ENCODE measurements at regions of chr11 and their contacts with region 1.

Region 1: GRCh38 chr11:12288212-12288930 is 89.0 kb upstream of the PARVA start:
- DNase-seq: peak; percentile 83
- H3K4me3 ChIP-seq: peak overlapping the region; percentile 27
- CTCF ChIP-seq: peak; percentile 94

Region 2: DNA sequence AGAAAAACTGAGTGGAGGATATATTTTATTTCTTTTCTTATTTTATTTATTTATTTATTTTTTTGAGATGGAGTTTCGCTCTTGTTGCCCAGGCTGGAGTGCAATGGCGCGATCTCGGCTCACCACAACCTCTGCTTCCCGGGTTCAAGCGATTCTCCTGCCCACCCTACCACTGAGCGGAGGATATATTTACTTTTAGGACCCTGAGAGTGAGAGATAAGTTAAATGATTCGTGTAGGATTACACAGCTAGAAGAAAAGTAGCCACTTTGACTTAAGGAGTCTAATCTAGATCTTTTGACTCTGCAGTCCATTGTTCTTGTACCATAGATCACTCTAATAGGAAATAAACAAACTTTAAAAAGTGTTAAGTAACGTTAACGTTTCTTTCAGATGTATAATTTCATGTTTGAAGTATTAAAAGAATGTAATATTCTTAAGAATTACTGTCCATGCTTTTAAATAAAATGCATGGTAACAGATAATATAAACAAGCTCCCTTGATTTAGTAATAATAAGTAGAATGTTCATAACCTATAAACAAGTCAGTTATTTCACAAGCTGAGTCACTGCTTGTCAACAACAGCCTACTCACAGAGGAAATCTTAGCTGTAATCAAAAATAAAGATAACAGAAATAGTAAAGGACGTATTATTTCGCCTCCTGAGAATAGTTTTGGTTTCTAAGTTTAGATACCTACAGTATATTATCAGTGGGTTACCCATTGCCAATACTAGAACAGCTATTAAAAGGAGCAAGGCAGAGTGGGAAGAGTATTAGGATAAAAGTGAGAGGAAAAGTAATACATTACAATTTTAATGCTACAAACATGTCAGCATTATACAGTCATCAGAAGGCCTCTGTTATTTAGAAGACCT is 428.0 kb before region 1 on chr11:
- CTCF ChIA-PET with region 1: no interaction called
- POLR2A ChIA-PET with region 1: no interaction called
- DNase-seq: no peak
- H3K4me3 ChIP-seq: no peak overlapping the region
- CTCF ChIP-seq: no peak

Region 3: DNA sequence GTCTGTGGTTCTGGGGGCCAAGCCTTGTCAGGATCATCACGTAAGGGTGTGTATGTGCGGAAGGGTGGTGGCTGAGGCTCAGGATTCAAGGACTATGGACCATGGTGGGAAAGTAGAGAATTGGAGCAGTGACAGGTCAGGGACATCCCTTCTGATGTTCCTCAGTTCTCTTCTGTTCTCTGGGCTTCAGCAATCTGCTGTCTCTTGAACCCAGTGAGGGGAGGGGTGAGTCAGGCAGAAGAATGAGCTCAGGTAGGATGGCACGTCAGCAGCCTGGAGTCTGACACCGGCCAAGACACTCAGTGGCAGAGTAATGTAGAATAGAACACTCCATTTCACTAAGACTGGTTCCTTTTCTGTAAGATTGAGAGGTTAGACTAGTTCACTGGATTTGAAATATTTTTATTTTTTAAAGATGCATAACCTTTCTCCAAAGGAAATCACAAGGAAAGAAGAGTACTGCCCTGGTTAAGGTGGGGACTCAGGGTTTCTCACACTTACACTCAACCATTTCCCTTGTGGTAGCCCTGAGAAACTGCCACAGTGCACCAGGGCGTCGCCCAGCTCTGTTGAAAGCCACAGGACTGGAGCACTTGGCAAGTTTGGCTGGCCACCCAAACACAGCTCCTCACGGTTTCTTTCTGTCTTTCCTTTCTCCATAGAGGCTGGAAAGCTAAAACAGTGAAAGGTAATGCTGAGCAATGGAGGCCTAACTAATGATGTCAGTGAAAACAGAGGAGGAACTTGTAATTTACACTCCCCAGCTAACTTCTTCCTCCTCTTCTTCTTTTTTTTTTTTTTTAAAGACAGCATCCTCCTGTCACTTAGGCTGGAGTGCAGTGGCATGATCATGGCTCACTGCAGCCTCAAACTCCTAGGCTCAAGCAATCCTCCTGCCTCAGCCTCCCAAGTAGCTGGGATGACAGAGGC is 201.0 kb before region 1 on chr11:
- CTCF ChIA-PET with region 1: interaction called, 7 read pairs
- POLR2A ChIA-PET with region 1: interaction called, 31 read pairs
- DNase-seq: no peak
- H3K4me3 ChIP-seq: peak overlapping the region; percentile 46
- CTCF ChIP-seq: peak; percentile 20

Region 4: GRCh38 chr11:12245549-12246016 is 42.8 kb before region 1 on chr11:
- CTCF ChIA-PET with region 1: no interaction called
- POLR2A ChIA-PET with region 1: no interaction called
- DNase-seq: no peak
- H3K4me3 ChIP-seq: no peak overlapping the region
- CTCF ChIP-seq: no peak

Region 5: GRCh38 chr11:12318791-12319438 is 30.5 kb after region 1 on chr11:
- CTCF ChIA-PET with region 1: interaction called, 32 read pairs
- POLR2A ChIA-PET with region 1: interaction called, 4 read pairs
- DNase-seq: peak; percentile 23
- H3K4me3 ChIP-seq: no peak overlapping the region
- CTCF ChIP-seq: no peak

Region 6: DNA sequence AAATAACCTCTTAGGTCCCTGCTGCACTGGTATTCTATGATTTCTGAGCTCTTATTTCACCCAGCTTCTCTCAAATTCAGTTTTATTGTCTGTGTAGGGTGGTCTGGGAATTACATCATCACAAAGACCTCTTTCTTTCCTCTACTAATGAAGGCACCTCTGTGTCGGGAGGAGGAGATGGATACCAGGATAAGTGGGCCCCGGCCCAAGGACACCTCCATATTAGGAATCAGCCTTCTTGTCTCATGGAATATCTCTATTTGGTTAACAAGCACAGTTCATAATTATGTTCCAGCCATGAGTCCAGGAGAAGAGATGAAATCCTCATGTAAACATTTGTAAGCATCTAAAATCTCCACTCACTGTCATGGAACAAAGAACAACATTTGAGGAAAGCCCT is 98.4 kb after region 1 on chr11:
- CTCF ChIA-PET with region 1: no interaction called
- POLR2A ChIA-PET with region 1: no interaction called
- DNase-seq: no peak
- H3K4me3 ChIP-seq: no peak overlapping the region
- CTCF ChIP-seq: no peak

Region 7: GRCh38 chr11:12526789-12527188 is 238.4 kb after region 1 on chr11:
- CTCF ChIA-PET with region 1: interaction called, 11 read pairs
- POLR2A ChIA-PET with region 1: no interaction called
- DNase-seq: no peak
- H3K4me3 ChIP-seq: no peak overlapping the region
- CTCF ChIP-seq: no peak

Region 8: DNA sequence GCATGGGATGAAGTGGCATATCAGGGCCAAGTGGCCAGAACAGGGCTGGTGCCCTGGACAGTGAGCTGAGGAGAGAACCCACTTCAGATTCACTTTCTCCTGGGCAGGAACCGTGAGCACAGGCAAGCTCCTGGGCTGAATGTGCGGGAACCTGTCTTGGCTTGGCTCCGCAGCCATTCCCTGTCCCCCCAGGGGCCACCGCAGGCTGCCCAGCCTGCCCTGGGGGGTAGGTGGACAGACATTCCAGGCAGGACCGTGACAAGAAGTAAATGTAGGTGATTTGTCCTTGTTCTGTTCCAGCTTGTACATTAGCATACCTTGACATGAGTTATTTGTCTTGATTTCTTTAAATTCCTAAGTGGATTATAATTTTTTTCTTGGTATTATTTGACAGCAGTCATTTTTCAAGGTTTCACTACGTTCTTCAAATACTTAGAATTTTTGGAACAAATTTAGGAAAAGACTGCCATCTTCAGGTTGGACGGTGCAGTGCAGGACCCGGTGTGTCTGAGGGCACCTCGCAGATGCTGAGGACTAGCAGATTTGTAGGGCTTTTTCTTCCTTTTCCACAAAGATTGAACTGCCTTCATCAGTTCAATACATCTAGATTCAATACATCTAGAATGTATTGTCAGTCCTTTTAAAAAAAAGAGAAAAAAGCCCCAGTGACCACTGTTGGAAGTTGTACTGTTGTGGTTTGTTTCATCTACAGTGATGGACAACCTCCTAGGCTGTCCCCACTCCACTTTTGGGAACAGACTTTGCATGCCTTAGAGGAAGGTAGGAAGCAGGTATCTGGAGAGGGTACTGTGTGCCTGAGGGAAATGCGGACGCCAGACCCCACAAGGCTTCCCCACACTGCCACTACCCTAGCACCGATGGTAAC is 605.7 kb after region 1 on chr11:
- CTCF ChIA-PET with region 1: interaction called, 31 read pairs
- POLR2A ChIA-PET with region 1: interaction called, 4 read pairs
- DNase-seq: no peak
- H3K4me3 ChIP-seq: no peak overlapping the region
- CTCF ChIP-seq: peak; percentile 70

Region 9: DNA sequence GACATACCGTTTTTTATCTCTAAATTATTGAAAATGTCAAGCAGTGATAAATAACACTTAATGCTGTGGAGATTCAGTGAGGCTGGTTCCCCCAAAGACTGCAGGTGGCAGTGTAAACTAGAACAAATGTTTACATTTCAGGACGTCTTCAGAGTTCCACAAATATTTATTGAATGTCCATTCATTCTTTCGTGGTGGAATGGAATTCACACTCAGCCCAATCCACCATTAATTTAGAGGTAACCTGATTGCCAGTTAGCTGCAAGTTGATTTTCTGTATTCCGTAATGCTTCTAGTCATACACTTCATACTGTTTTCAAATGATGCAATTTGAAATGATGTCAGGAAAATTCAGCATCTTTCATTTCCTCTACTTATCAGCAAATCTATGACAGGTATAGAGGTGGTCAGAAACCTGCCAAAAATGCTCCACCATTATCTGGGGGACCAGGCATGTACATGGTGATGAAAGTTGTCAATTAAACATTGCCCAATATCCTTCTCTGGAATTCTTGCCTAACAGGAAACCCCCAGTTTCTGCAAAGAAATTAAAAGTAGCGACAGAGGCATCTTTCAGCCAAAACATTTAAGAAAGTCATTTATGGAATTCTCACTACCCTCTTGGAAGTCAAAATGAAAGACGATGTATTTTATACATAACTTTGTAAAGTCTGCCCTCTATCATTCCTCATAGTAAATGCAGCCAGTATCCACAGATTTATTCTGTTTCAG is 894.9 kb after region 1 on chr11:
- CTCF ChIA-PET with region 1: interaction called, 10 read pairs
- POLR2A ChIA-PET with region 1: no interaction called
- DNase-seq: peak; percentile 36
- H3K4me3 ChIP-seq: peak overlapping the region; percentile 28
- CTCF ChIP-seq: peak; percentile 24

Measured in AG04449 (cell line).